Activated CD8-positive, alpha-beta T cell treated with anti-CD3 and anti-CD28 coated beads, Interleukin-2, amount 10 ng/mL, durations not matched to agents 7 days and 5 days (primary cell): ENCODE measurements at regions of chr6 and their contacts with region 1.

Region 1: DNA sequence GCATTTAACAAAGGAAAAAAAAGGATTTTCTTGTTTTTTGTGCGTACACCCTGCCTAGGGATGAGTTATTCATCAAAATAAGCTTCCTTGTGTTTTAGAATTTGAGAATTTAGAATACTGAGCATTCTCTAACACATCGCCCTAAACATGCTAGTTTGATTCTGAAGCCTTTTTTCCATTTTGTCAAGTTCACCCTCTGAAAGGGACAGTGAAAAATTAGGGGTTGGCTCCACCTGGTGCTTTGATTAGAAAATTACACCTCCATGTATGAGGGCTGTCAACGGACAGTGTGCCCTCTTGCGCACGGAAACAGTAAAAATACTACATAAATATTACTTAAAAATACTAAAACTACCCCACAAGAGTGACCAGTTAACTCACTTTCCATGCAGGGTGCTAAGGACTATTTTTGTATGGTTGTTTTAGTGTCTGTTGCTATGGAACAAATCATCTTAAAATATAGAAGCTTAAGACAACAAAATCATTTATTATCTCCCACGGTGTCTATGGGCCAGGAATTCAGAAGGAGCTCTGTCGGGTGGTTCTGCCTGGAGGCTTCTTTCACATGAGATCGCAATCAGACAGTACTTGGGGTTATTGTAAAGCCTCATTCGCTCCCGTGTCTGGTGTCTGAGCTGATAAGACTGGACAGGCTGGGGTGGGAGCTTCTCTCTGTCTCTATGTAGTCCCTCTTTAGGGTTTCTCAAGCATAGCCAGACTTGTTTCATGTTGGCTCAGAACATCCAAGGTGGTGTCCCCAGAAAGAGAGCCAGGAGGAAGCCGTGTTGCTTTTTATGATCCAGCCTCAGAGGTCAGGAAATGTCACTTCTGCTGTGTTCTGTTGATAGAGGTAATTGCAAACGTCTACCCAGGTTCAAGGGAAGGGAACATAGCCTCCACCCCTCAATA is 41.1 kb upstream of the TMEM170B start:
- DNase-seq: peak; percentile 86
- ATAC-seq: peak; percentile 88
- H3K4me3 Mint-ChIP-seq: no peak overlapping the region
- H3K27ac Mint-ChIP-seq: no peak overlapping the region
- H3K4me1 Mint-ChIP-seq: peaks cover 10% of the 10 kb centered on the region
- H3K27me3 Mint-ChIP-seq: no peaks in the 10 kb centered on the region

Region 2: DNA sequence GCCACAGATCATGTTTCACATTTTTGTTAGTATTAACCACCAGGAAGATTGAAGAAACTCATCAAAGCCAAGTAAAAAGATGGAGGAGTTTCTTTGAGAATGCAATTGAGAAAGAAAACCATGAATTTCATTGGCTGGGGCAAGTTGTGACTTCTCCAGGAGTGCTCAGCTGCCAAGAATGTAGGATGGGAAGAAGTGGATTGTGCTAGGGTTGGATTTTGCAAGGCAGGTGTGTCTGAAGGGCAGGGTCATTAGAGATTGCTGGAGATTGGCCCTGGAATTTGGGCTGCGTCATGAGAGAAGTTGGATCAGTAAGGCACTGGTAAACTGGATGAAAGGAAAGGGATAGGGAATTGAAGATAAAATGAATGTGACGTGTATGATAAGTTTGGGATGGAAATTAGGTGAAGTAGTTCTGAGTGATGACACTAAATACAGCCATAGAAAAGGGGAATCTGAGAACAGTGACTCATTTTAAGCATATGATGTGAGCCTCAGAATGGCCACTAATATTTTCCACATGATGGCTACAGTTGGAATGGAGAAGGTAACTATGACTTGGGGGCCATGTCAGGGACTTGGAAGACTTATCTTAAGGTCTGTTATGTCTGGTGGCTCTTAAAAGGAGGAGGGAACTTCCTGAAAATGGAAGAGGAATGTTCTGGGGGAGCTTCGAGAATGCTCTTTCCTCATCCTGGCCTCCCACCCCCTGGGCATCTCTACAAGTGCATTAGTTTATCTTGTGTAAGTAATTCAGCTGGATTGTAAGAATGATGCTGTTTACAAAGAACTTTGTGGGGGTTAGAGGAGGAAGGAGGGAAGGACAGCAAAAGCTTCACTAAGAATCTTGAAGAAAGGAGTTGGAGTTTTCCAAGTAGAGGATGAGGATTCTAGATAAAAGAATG is 357.1 kb before region 1 on chr6:
- CTCF ChIA-PET with region 1: interaction called, 102 read pairs
- POLR2A ChIA-PET with region 1: interaction called, 5 read pairs
- DNase-seq: no peak
- ATAC-seq: no peak
- H3K4me3 Mint-ChIP-seq: no peak overlapping the region
- H3K27ac Mint-ChIP-seq: no peak overlapping the region
- H3K4me1 Mint-ChIP-seq: no peaks in the 10 kb centered on the region
- H3K27me3 Mint-ChIP-seq: no peaks in the 10 kb centered on the region

Region 3: GRCh38 chr6:11172501-11173332 is 323.7 kb before region 1 on chr6:
- CTCF ChIA-PET with region 1: interaction called, 48 read pairs
- POLR2A ChIA-PET with region 1: no interaction called
- DNase-seq: peak; percentile 83
- ATAC-seq: peak; percentile 79
- H3K4me3 Mint-ChIP-seq: no peak overlapping the region
- H3K27ac Mint-ChIP-seq: no peak overlapping the region
- H3K4me1 Mint-ChIP-seq: peaks cover 22% of the 10 kb centered on the region
- H3K27me3 Mint-ChIP-seq: no peaks in the 10 kb centered on the region

Region 4: DNA sequence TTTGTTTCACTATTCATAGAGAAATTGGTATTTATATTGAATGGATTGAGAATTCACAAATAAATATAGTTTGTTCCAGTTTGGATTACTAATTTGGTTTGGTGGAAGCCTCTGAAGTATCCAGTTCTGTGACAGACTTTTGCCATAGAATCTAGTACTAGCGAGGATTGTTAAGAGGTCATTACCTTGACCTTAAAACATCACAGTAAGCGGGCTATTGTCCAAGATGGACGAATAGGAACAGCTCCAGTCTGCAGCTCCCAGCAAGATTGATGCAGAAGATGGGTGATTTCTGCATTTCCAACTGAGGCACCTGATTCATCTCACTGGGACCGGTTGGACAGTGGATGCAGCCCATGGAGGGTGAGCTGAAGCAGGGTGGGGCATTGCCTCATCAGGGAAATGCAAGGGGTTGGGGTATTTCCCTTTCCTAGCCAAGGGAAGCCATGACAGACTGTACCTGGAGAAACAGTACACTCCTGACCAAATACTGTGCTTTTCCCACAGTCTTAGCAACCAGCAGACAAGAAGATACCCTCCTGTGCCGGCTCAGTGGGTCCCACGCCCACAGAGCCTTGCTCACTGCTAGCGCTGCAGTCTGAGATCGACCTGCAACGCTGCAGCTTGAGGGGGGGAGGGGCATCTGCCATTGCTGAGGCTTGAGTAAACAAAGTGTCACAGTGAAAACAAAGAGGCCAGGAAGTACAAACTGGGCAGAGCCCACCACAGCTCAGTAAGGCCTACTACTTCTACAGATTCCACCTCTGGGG is 197.6 kb before region 1 on chr6:
- CTCF ChIA-PET with region 1: interaction called, 10 read pairs
- POLR2A ChIA-PET with region 1: no interaction called
- DNase-seq: no peak
- ATAC-seq: no peak
- H3K4me3 Mint-ChIP-seq: no peak overlapping the region
- H3K27ac Mint-ChIP-seq: peak overlapping the region; percentile 31
- H3K4me1 Mint-ChIP-seq: peaks cover 32% of the 10 kb centered on the region
- H3K27me3 Mint-ChIP-seq: no peaks in the 10 kb centered on the region

Region 5: GRCh38 chr6:11414176-11414963 is 82.0 kb before region 1 on chr6:
- CTCF ChIA-PET with region 1: interaction called, 12 read pairs
- POLR2A ChIA-PET with region 1: no interaction called
- DNase-seq: peak; percentile 56
- ATAC-seq: peak; percentile 47
- H3K4me3 Mint-ChIP-seq: peak overlapping the region; percentile 4
- H3K27ac Mint-ChIP-seq: no peak overlapping the region
- H3K4me1 Mint-ChIP-seq: peaks cover 50% of the 10 kb centered on the region
- H3K27me3 Mint-ChIP-seq: no peaks in the 10 kb centered on the region

Region 6: DNA sequence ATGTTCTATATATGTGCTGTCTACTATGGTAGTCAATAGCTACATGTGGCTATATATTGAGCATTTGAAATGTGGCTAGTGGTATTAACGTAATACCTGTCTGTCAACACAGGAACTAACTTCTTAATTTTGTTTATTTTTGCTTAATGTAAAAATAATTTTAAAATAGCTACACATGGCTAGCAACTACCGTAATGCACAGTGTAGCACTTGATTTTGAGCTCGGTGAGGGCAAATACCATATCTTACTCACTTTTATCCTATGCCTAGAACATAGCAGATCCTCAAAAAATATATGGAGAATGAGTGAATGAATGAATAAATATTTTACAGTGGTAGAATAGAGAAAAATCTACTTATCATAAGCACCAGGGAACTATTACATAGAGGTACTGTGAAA is 13.1 kb after region 1 on chr6:
- CTCF ChIA-PET with region 1: interaction called, 15 read pairs
- POLR2A ChIA-PET with region 1: no interaction called
- DNase-seq: no peak
- ATAC-seq: no peak
- H3K4me3 Mint-ChIP-seq: no peak overlapping the region
- H3K27ac Mint-ChIP-seq: no peak overlapping the region
- H3K4me1 Mint-ChIP-seq: no peaks in the 10 kb centered on the region
- H3K27me3 Mint-ChIP-seq: peaks cover 29% of the 10 kb centered on the region

Region 7: DNA sequence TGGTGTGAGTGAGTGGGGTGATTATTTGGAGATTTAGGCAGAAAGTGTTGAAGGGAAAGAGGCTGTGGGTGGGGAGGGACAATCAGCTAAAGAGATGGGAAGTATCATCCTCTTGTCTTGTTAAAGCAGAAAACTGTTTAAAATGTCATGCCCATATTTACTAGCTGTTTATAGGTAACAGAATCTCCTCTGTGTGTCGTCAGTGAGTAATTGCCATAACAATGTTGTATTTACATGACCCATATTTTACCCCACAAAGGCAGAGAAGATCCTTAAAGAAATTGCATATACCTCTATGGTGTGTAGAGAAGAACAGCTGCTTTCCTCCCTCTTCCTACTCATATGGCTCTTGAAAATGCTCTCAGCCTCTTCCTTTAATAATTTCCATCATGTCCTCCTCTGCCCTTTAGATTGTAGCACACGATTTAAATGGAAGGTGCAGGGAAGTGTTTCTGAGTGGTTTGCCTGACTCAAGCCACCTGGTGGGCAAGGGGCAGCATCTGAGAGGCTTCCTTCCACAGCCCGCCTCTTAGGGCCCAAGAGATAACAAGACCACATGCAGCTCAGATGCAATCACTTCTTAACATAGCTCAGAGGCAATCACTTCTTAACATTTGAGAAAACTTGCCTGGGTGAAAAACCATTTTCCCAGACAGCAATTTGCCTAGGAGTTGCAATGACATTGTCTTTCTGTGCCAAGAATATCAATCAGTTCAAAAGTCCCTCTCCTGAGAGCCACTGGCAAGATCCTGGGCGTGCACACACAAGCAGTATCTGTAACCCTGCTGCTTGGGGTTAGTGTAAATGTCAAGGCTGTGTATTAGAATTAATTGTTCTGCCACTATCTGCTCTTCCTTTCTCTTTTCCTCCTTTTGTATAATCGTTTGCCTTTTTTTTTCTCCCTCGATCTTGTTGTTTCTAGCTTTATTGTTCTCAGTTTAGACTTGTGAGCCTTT is 749.6 kb after region 1 on chr6:
- CTCF ChIA-PET with region 1: no interaction called
- POLR2A ChIA-PET with region 1: no interaction called
- DNase-seq: no peak
- ATAC-seq: no peak
- H3K4me3 Mint-ChIP-seq: no peak overlapping the region
- H3K27ac Mint-ChIP-seq: no peak overlapping the region
- H3K4me1 Mint-ChIP-seq: no peaks in the 10 kb centered on the region
- H3K27me3 Mint-ChIP-seq: peaks cover 17% of the 10 kb centered on the region